Natural killer cell (primary cell): ENCODE measurements at regions of chr20 and their contacts with region 1.

Region 1: DNA sequence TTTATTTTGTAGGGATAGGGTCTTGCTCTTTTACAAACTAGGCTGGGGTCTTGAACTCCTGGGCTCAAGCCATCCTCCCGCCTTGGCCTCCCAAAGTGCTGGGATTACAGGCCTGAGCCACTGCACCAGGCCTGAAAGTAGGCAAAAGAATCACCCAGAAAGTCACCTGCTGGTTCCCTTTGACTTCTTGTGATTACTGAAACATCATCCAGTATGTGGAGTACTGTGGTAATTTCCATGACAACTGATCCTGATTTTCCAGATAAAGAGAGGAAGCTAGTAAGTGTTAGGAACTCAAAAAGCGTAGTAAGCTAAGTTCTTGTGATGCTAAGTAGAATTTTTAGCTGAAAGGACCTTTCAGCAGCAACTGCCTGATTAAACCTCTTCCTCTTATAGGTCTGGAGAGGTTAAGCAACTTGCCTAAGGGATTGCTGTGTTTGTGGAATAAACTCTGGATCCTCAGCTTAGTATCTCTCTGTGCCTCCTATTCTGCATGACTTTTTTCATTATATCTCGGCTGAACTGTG is 16.8 kb downstream of the RALY start:
- DNase-seq: no peak
- ATAC-seq: no peak
- H3K4me3 ChIP-seq: no peak overlapping the region
- H3K4me3 Mint-ChIP-seq: peak overlapping the region; percentile 81
- H3K27ac ChIP-seq: peak overlapping the region; percentile 56
- H3K27ac Mint-ChIP-seq: peak overlapping the region; percentile 86
- H3K4me1 ChIP-seq: peaks cover 34% of the 10 kb centered on the region
- H3K4me1 Mint-ChIP-seq: peaks cover 85% of the 10 kb centered on the region in 2 donors
- H3K27me3 ChIP-seq: no peaks in the 10 kb centered on the region
- H3K27me3 Mint-ChIP-seq: no peaks in the 10 kb centered on the region
- CTCF ChIP-seq: no peak

Region 2: GRCh38 chr20:33963751-33964150 is 46.7 kb before region 1 on chr20:
- intact Hi-C with region 1: no loop called
- DNase-seq: no peak
- ATAC-seq: no peak
- H3K4me3 ChIP-seq: no peak overlapping the region
- H3K4me3 Mint-ChIP-seq: no peak overlapping the region
- H3K27ac ChIP-seq: no peak overlapping the region
- H3K27ac Mint-ChIP-seq: no peak overlapping the region
- H3K4me1 ChIP-seq: no peaks in the 10 kb centered on the region
- H3K4me1 Mint-ChIP-seq: no peaks in the 10 kb centered on the region
- H3K27me3 ChIP-seq: no peaks in the 10 kb centered on the region
- H3K27me3 Mint-ChIP-seq: peaks cover 0 to 3% of the 10 kb centered on the region in 2 donors
- CTCF ChIP-seq: no peak

Region 3: DNA sequence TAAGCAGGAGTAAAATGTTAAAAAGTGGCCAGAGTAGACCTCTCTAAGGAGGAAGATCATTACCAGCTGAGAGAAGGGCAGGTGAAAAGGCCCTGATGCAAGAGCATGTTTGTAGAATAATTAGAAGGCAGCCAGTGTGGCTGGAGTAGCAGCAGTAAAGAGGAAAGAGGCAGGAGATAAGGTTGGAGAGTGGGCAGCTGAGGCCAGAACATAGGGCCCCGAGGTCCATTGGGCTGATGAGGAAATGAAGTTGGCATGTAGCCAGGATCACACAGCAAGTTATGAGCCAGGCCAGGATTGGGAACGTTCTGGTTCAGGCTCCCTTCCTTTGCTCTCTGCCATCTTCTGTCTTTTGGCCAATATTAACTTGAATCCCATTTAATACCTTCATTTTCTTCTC is 34.8 kb after region 1 on chr20:
- intact Hi-C with region 1: loop called (anchors 5 kb)
- DNase-seq: no peak
- ATAC-seq: no peak
- H3K4me3 ChIP-seq: no peak overlapping the region
- H3K4me3 Mint-ChIP-seq: no peak overlapping the region
- H3K27ac ChIP-seq: no peak overlapping the region
- H3K27ac Mint-ChIP-seq: peak overlapping the region; percentile 27 to 62
- H3K4me1 ChIP-seq: peaks cover 14% of the 10 kb centered on the region
- H3K4me1 Mint-ChIP-seq: peaks cover 86 to 89% of the 10 kb centered on the region in 2 donors
- H3K27me3 ChIP-seq: no peaks in the 10 kb centered on the region
- H3K27me3 Mint-ChIP-seq: no peaks in the 10 kb centered on the region
- CTCF ChIP-seq: no peak